Activated T-helper 1 cell treated with anti-CD3 and anti-CD28 coated beads, Interleukin-12 subunit alpha, Interleukin-12 subunit beta, Interleukin-2, Interleukin-4 antibody, amounts not matched to agents 30 ng/mL and 10 ng/mL and 1 ng/mL, durations not matched to agents 14 hours and 24 hours and 36 hours (primary cell): ENCODE measurements at regions of chr7 and their contacts with region 1.

Region 1: DNA sequence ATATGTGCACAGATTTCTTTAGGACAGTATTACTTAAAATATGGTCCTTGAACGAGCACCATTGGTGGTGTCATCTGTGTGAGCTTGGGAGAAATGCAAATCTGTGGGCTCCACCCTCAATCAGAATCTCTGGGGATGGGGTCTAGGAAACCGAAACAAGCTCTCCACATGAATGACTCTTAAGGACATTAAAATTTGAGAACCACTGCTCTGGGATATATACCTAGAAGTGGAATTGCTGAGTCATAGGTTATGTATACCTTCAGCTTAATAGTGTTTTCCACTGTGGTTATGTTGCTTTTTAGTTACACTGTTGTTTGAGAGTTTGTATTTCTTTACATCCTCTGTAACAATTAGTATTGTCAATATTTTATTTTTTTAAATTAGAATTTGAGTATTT is 24.0 kb downstream of the ZNRF2 start:
- DNase-seq: no peak
- H3K4me3 Mint-ChIP-seq: no peak overlapping the region
- H3K27ac Mint-ChIP-seq: no peak overlapping the region
- H3K4me1 Mint-ChIP-seq: peaks cover 33% of the 10 kb centered on the region
- H3K27me3 Mint-ChIP-seq: peaks cover 1% of the 10 kb centered on the region

Region 2: GRCh38 chr7:28754027-28754426 is 1554.4 kb before region 1 on chr7:
- intact Hi-C with region 1: no loop called
- DNase-seq: no peak
- H3K4me3 Mint-ChIP-seq: no peak overlapping the region
- H3K27ac Mint-ChIP-seq: no peak overlapping the region
- H3K4me1 Mint-ChIP-seq: no peaks in the 10 kb centered on the region
- H3K27me3 Mint-ChIP-seq: no peaks in the 10 kb centered on the region

Region 3: DNA sequence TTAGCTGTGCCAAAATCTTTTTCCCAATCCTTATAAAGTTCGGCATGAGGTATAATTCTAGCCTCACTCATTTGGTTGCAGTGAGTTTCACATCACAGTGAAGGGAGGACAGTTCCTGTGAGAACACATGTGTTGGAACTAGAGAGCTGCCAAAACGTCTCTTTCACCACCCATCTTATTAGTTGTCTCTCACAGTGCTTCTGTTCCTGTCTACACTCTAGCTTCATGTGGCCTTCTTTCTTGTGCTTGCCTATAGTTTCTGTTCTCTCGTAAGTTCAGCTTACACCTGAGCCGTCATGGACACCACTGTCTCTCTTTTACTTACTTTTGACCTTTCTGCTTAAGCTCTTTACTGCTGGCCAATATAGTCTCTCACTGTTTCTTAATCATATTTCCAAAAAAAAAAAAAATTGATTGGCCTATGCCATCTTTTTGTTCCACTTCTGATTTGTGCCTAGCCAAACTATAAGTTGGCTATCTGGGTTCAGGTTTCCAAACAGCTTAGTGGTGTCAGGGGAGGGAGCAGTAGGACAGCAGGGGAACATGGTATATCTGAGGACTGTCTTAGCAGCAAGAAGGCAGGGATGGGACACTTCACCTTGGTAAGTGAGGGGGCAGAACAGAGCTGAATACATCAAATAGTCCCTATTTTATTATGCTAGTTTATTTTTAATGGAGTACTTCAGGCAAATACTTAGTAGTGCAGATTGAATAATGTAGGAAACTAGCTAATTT is 14.0 kb after region 1 on chr7:
- intact Hi-C with region 1: loop called (anchors 2 kb)
- DNase-seq: peak; percentile 11
- H3K4me3 Mint-ChIP-seq: peak overlapping the region; percentile 84
- H3K27ac Mint-ChIP-seq: peak overlapping the region; percentile 94
- H3K4me1 Mint-ChIP-seq: peaks cover 59% of the 10 kb centered on the region
- H3K27me3 Mint-ChIP-seq: no peaks in the 10 kb centered on the region

Region 4: GRCh38 chr7:30330134-30331111 is 22.0 kb after region 1 on chr7:
- intact Hi-C with region 1: loop called (anchors 2 kb)
- DNase-seq: peak; percentile 17
- H3K4me3 Mint-ChIP-seq: peak overlapping the region; percentile 60
- H3K27ac Mint-ChIP-seq: peak overlapping the region; percentile 18
- H3K4me1 Mint-ChIP-seq: peaks cover 39% of the 10 kb centered on the region
- H3K27me3 Mint-ChIP-seq: no peaks in the 10 kb centered on the region

Region 5: GRCh38 chr7:30702200-30702599 is 393.8 kb after region 1 on chr7:
- intact Hi-C with region 1: no loop called
- DNase-seq: peak; percentile 10
- H3K4me3 Mint-ChIP-seq: no peak overlapping the region
- H3K27ac Mint-ChIP-seq: no peak overlapping the region
- H3K4me1 Mint-ChIP-seq: peaks cover 14% of the 10 kb centered on the region
- H3K27me3 Mint-ChIP-seq: no peaks in the 10 kb centered on the region